ENCODE measurements at regions of chr17 and their contacts with region 1.

Region 1: GRCh38 chr17:48908047-48908843 is at the start of gene UBE2Z:
- DNase-seq: peak; percentile 78 to 95
- ATAC-seq: peak; percentile 86 to 96 (median 88)
- H3K4me3 ChIP-seq: peak within 1 kb of the TSS; percentile 53
- H3K4me3 Mint-ChIP-seq: peak within 1 kb of the TSS; percentile 91
- H3K27ac ChIP-seq: peak within 1 kb of the TSS; percentile 92
- H3K27ac Mint-ChIP-seq: peak within 1 kb of the TSS; percentile 86 to 98
- H3K4me1 ChIP-seq: peaks cover 24% of the 10 kb centered on the region
- H3K4me1 Mint-ChIP-seq: peaks cover 45 to 49% of the 10 kb centered on the region in 2 donors
- H3K27me3 ChIP-seq: no peaks in the 10 kb centered on the region
- H3K27me3 Mint-ChIP-seq: no peaks in the 10 kb centered on the region
- CTCF ChIP-seq: no peak
- total RNA-seq, gene UBE2Z: 89.0 to 94.0 (median 89.6) TPM

Region 2: GRCh38 chr17:48892940-48893645 is 15.2 kb before region 1 on chr17:
- intact Hi-C with region 1: loop called (anchors 1 kb)
- DNase-seq: peak in 1 of 2 donors; percentile 45
- ATAC-seq: no peak
- H3K4me3 ChIP-seq: peak overlapping the region; percentile 50
- H3K4me3 Mint-ChIP-seq: peak overlapping the region; percentile 98
- H3K27ac ChIP-seq: peak overlapping the region; percentile 91
- H3K27ac Mint-ChIP-seq: peak overlapping the region; percentile 97 to 98
- H3K4me1 ChIP-seq: peaks cover 17% of the 10 kb centered on the region
- H3K4me1 Mint-ChIP-seq: peaks cover 22 to 24% of the 10 kb centered on the region in 2 donors
- H3K27me3 ChIP-seq: no peaks in the 10 kb centered on the region
- H3K27me3 Mint-ChIP-seq: no peaks in the 10 kb centered on the region
- CTCF ChIP-seq: no peak

Region 3: DNA sequence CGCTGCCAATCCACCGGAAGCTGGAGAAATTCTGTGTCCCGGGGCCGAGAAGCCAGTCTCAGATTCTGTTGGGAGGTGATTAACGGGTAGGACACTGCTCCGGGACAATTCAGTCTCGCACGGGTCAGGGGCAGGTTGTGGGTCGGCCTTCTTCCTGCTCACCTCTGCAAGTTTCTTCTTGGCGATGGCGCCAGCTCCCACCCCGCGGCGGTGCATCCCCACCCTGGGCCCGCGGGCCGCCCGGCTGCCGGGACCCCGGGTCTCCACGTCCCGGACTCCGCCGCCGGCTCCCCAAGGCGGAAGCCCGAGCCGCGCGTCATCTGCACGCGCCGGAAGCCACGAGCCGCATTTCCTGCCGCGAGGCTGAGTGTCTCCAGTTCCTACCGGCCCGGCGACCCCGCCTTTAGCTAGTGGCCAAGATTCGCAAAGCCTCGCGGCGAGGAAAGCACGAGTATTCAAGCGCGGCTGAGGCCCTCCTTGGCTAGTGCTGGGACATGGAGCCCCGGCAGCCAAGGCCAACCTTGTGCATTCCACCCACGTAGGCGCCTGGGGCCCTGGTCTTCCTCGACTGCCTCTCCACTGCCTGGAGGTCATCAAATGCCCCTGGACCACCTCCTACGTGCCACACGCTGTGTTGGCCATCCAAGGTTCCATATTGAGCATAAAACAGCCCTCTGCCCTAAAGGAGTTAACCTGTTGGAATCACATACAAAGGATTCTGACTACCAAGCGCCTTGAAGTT is 36.4 kb after region 1 on chr17 and contains the start of gene SNF8:
- intact Hi-C with region 1: loop called (anchors 1 kb)
- DNase-seq: peak; percentile 93 to 96
- ATAC-seq: peak; percentile 94 to 95 (median 95)
- H3K4me3 ChIP-seq: peak within 1 kb of the TSS; percentile 99
- H3K4me3 Mint-ChIP-seq: peak within 1 kb of the TSS; percentile 98
- H3K27ac ChIP-seq: peak within 1 kb of the TSS; percentile 90
- H3K27ac Mint-ChIP-seq: peak within 1 kb of the TSS; percentile 89 to 98
- H3K4me1 ChIP-seq: peaks cover 29% of the 10 kb centered on the region
- H3K4me1 Mint-ChIP-seq: peaks cover 17% of the 10 kb centered on the region in 2 donors
- H3K27me3 ChIP-seq: no peaks in the 10 kb centered on the region
- H3K27me3 Mint-ChIP-seq: peaks cover 0 to 6% of the 10 kb centered on the region in 2 donors
- CTCF ChIP-seq: no peak
- total RNA-seq, gene SNF8: 76.9 to 86.0 (median 78.3) TPM

Region 4: GRCh38 chr17:48985436-48986245 is 77.4 kb after region 1 on chr17:
- intact Hi-C with region 1: no loop called
- DNase-seq: no peak
- ATAC-seq: no peak
- H3K4me3 ChIP-seq: no peak overlapping the region
- H3K4me3 Mint-ChIP-seq: no peak overlapping the region
- H3K27ac ChIP-seq: no peak overlapping the region
- H3K27ac Mint-ChIP-seq: no peak overlapping the region
- H3K4me1 ChIP-seq: no peaks in the 10 kb centered on the region
- H3K4me1 Mint-ChIP-seq: no peaks in the 10 kb centered on the region
- H3K27me3 ChIP-seq: peaks cover 10% of the 10 kb centered on the region
- H3K27me3 Mint-ChIP-seq: peaks cover 28 to 42% of the 10 kb centered on the region in 2 donors
- CTCF ChIP-seq: no peak

Region 5: GRCh38 chr17:48997083-48997826 is 89.0 kb after region 1 on chr17 and contains the start of gene IGF2BP1:
- intact Hi-C with region 1: no loop called
- DNase-seq: peak; percentile 26 to 46
- ATAC-seq: peak in 2 of 3 donors; percentile 48 to 52
- H3K4me3 ChIP-seq: peak within 1 kb of the TSS; percentile 9
- H3K4me3 Mint-ChIP-seq: peak within 1 kb of the TSS; percentile 68
- H3K27ac ChIP-seq: no peak within 1 kb of the TSS
- H3K27ac Mint-ChIP-seq: no peak within 1 kb of the TSS
- H3K4me1 ChIP-seq: peaks cover 37% of the 10 kb centered on the region
- H3K4me1 Mint-ChIP-seq: peaks cover 13 to 31% of the 10 kb centered on the region in 2 donors
- H3K27me3 ChIP-seq: peaks cover 95% of the 10 kb centered on the region
- H3K27me3 Mint-ChIP-seq: peaks cover 72 to 79% of the 10 kb centered on the region in 2 donors
- CTCF ChIP-seq: no peak
- total RNA-seq, gene IGF2BP1: not detected